ENCODE measurements at regions of chr10 and their contacts with region 1.

Region 1: DNA sequence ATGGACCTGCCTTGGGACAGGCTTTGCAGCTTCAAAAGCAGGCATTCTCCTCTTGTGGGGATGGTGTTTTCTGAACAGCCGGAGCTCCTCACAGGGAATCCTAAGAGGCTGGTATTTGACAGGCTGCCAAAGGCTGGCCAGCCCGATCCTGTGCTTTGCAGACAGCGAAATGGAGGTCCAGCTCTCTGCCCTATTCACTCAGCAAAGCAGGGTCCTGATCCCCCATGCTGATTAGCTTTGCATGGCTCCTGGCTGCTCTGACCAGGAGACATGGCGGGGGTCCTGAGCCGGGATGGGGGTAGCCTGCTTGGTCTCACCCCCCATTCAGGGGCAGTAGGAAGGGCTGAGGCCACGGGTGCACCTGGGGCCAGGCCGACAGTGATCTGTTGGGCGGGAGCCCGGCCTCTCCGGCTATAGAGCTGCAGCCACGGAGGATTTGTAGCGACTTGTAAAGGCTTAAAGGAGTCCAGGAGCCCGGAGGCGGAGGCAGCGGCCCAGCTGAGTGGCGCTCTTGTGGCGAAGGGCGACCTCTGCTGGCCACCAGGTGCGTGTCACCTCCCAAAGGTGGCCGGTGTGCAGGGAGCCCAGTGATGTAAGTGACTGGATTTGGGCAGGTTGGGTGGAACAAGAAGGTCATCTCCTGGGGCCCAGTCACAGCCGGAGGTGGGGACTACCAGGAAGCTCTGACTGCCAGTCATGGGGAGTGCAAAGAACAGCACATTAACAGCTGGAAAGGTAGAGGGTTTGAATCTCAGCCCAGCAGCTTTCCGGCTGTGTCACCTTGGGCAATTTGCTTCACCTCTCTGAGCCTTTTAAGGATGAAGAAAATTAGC is 126.5 kb downstream of the ZMIZ1 start:
- DNase-seq: peak; percentile 87
- H3K27ac ChIP-seq: peak overlapping the region; percentile 94
- CTCF ChIP-seq: peak; percentile 92

Region 2: GRCh38 chr10:79029478-79030390 is 165.6 kb before region 1 on chr10:
- CTCF ChIA-PET with region 1: no interaction called
- POLR2A ChIA-PET with region 1: no interaction called
- DNase-seq: no peak
- H3K27ac ChIP-seq: no peak overlapping the region
- CTCF ChIP-seq: no peak

Region 3: GRCh38 chr10:79068562-79069324 is 126.6 kb before region 1 on chr10 and contains the start of gene ZMIZ1:
- CTCF ChIA-PET with region 1: interaction called, 42 read pairs
- POLR2A ChIA-PET with region 1: no interaction called
- DNase-seq: peak; percentile 96
- H3K27ac ChIP-seq: peak within 1 kb of the TSS; percentile 100
- CTCF ChIP-seq: no peak; the same call in 1 of the 2 replicates

Region 4: GRCh38 chr10:79127151-79127961 is 68.0 kb before region 1 on chr10:
- CTCF ChIA-PET with region 1: interaction called, 14 read pairs
- POLR2A ChIA-PET with region 1: interaction called, 5 read pairs
- DNase-seq: peak; percentile 74
- H3K27ac ChIP-seq: peak overlapping the region; percentile 79
- CTCF ChIP-seq: no peak

Region 5: GRCh38 chr10:79159141-79159651 is 36.1 kb before region 1 on chr10:
- CTCF ChIA-PET with region 1: interaction called, 17 read pairs
- POLR2A ChIA-PET with region 1: interaction called, 3 read pairs
- DNase-seq: no peak
- H3K27ac ChIP-seq: peak overlapping the region; percentile 99
- CTCF ChIP-seq: no peak

Measured in RWPE1 (cell line).